ENCODE measurements at regions of chrX and their contacts with region 1.

Region 1: GRCh38 chrX:24693453-24694202 is at the start of gene POLA1:
- DNase-seq: peak; percentile 94 to 96
- H3K4me3 ChIP-seq: peak within 1 kb of the TSS; percentile 75
- H3K4me3 Mint-ChIP-seq: peak within 1 kb of the TSS; percentile 81
- H3K27ac Mint-ChIP-seq: peak within 1 kb of the TSS; percentile 95
- H3K4me1 ChIP-seq: no peaks in the 10 kb centered on the region
- H3K4me1 Mint-ChIP-seq: peaks cover 5% of the 10 kb centered on the region
- H3K27me3 ChIP-seq: no peaks in the 10 kb centered on the region
- H3K27me3 Mint-ChIP-seq: no peaks in the 10 kb centered on the region
- CTCF ChIP-seq: peak in 1 of 2 experiments; percentile 45
- total RNA-seq, gene POLA1: 21.6 and 23.5 TPM in 2 replicates

Region 2: GRCh38 chrX:24371391-24371972 is 322.1 kb before region 1 on chrX:
- CTCF ChIA-PET with region 1: no interaction called
- POLR2A ChIA-PET with region 1: no interaction called
- intact Hi-C with region 1: no loop called
- DNase-seq: peak; percentile 46 to 47
- H3K4me3 ChIP-seq: no peak overlapping the region
- H3K4me3 Mint-ChIP-seq: no peak overlapping the region
- H3K27ac Mint-ChIP-seq: no peak overlapping the region
- H3K4me1 ChIP-seq: no peaks in the 10 kb centered on the region
- H3K4me1 Mint-ChIP-seq: no peaks in the 10 kb centered on the region
- H3K27me3 ChIP-seq: no peaks in the 10 kb centered on the region
- H3K27me3 Mint-ChIP-seq: no peaks in the 10 kb centered on the region
- CTCF ChIP-seq: peak; percentile 22 to 53

Region 3: GRCh38 chrX:24658411-24658810 is 35.2 kb before region 1 on chrX:
- CTCF ChIA-PET with region 1: no interaction called
- POLR2A ChIA-PET with region 1: interaction called, 7 read pairs
- intact Hi-C with region 1: loop called (anchors 1 kb)
- DNase-seq: peak; percentile 44 to 48
- H3K4me3 ChIP-seq: no peak overlapping the region
- H3K4me3 Mint-ChIP-seq: no peak overlapping the region
- H3K27ac Mint-ChIP-seq: peak overlapping the region; percentile 8
- H3K4me1 ChIP-seq: peaks cover 25% of the 10 kb centered on the region; the same call in 1 of the 2 replicates
- H3K4me1 Mint-ChIP-seq: peaks cover 6% of the 10 kb centered on the region
- H3K27me3 ChIP-seq: no peaks in the 10 kb centered on the region
- H3K27me3 Mint-ChIP-seq: no peaks in the 10 kb centered on the region
- CTCF ChIP-seq: no peak

Region 4: DNA sequence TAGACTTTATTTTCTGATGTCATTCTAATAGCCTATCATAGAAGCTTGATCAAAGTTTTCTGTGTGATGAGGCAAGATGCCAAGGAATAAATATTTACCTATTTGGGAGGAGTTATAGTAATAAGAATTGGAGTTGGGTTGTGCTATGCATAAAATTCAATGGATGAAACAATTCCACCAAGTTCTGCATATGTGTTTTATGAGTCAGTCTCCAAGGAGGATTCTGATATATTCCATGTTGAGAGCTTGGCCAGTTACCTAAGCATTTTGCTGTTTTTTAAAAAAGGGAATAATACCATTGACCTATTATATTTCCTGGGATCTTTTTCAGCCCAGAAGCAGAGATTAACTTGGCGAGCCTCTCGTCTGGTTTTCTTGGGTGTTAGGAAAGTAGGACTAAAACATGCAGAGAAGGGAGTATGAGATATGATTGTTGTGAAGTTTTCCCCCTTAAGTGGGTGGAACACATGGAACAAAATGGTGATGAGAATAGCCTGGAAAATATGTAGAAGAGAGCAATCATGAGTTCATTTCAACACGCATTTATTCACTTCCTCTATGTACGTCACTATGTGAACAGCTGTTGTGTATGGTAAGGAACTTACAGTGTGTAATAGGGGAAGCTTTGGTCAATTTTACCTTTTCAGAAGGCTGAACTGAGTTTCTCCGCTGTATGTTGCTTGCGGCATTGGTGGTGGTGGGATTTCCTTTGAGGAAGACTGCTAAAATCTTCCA is 39.3 kb after region 1 on chrX:
- CTCF ChIA-PET with region 1: no interaction called
- POLR2A ChIA-PET with region 1: no interaction called
- intact Hi-C with region 1: no loop called
- DNase-seq: no peak
- H3K4me3 ChIP-seq: no peak overlapping the region
- H3K4me3 Mint-ChIP-seq: no peak overlapping the region
- H3K27ac Mint-ChIP-seq: no peak overlapping the region
- H3K4me1 ChIP-seq: no peaks in the 10 kb centered on the region
- H3K4me1 Mint-ChIP-seq: no peaks in the 10 kb centered on the region
- H3K27me3 ChIP-seq: no peaks in the 10 kb centered on the region
- H3K27me3 Mint-ChIP-seq: no peaks in the 10 kb centered on the region
- CTCF ChIP-seq: no peak

Measured in Caco-2 (cell line).